ENCODE measurements at regions of chr3 and their contacts with region 1.

Region 1: DNA sequence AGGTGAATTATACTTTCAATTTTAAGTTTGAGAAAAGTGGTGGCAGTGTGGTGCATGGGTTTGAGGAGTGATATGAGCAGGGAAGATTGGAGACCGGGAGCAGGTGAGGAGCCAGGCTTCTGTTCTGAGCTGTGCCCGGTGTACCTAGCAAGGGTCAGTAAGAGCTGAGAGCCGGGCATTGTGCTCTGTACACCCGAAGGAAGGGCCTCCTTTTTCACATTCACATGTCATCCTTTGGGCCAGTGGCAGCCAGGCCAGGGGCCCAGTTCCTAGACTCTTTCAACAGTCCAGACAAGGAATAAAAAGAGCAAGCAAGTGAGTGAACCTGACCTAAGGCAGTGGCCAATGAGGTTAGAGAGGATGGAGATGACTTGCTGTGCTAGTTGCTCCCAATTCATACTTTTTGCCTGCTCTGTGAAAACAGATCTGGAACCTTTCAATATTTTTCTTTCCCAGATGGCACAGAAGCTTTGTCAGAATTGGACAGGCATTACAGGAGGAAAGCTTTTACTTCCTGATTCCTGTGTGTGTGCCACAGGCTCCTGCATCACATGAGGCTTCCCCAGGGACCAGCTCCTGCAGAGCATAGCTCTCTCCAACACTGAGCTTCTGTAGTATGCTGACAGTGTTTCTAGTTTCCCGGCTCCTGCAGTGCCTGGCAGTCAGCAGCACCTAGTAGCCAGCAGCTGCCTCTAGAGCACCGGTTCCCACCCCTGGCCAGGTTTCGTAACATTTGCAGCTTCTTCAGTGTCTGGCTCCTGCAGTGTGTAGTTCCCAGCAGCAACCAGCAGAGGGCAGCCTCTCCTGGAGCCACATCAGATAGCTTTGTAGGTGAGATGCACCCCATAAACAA is 5.3 kb upstream of the TRA2B start:
- DNase-seq: peak; percentile 76 to 93 (median 80)
- ATAC-seq: peak; percentile 100
- H3K4me3 ChIP-seq: peak overlapping the region; percentile 19
- H3K4me3 Mint-ChIP-seq: peak overlapping the region; percentile 52
- H3K27ac ChIP-seq: no peak overlapping the region
- H3K27ac Mint-ChIP-seq: peak overlapping the region; percentile 70
- H3K4me1 ChIP-seq: peaks cover 15% of the 10 kb centered on the region
- H3K4me1 Mint-ChIP-seq: peaks cover 23% of the 10 kb centered on the region
- H3K27me3 ChIP-seq: no peaks in the 10 kb centered on the region
- H3K27me3 Mint-ChIP-seq: no peaks in the 10 kb centered on the region
- CTCF ChIP-seq: peak; percentile 98

Region 2: DNA sequence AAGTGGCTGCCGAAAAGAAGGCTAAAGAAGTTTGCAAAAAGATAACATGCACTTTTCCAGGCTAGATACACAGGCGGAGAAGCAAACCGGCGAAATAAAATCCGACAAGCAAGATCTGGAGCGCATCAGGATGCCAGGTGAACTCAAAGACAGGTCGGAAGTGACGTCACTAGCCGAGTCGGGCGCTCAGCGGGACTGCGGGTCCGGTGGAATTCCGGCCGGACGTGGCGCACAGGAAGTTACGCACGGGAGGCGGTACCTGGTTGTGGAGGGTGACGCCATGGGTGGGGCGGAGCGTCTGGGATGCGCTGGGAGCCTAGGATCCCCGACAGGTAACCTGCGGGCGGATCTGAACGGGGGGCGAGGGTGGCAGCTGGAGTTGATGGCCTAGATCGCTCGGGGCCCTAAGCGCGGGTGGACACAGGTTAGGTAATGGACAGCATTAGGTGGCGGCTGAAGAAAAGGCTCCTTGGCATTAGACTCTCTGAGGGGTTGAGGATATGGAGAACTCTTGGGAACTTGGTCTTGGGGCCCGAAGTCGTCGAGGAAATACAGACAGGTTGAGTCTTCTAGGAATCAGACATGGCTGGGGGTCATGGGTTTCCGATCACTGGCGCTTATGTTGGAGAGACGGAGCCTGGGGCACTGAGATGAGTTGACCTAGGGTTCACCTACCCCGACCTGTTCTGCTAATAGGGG is 660.3 kb before region 1 on chr3:
- CTCF ChIA-PET with region 1: no interaction called
- POLR2A ChIA-PET with region 1: no interaction called
- intact Hi-C with region 1: loop called in 1 of 2 experiments (anchors 10 kb)
- DNase-seq: peak; percentile 83 to 97 (median 91)
- ATAC-seq: peak; percentile 99
- H3K4me3 ChIP-seq: peak overlapping the region; percentile 77
- H3K4me3 Mint-ChIP-seq: peak overlapping the region; percentile 92
- H3K27ac ChIP-seq: peak overlapping the region in 1 of 2 donors; percentile 65
- H3K27ac Mint-ChIP-seq: peak overlapping the region; percentile 84
- H3K4me1 ChIP-seq: peaks cover 14% of the 10 kb centered on the region
- H3K4me1 Mint-ChIP-seq: peaks cover 18% of the 10 kb centered on the region
- H3K27me3 ChIP-seq: peaks cover 3 to 10% of the 10 kb centered on the region in 2 experiments
- H3K27me3 Mint-ChIP-seq: peaks cover 26% of the 10 kb centered on the region
- CTCF ChIP-seq: no peak

Region 3: GRCh38 chr3:185912929-185913901 is 29.9 kb before region 1 on chr3:
- CTCF ChIA-PET with region 1: interaction called, 11 read pairs
- POLR2A ChIA-PET with region 1: interaction called, 23 read pairs
- intact Hi-C with region 1: no loop called
- DNase-seq: no peak
- ATAC-seq: peak; percentile 21
- H3K4me3 ChIP-seq: no peak overlapping the region
- H3K4me3 Mint-ChIP-seq: peak overlapping the region; percentile 12
- H3K27ac ChIP-seq: no peak overlapping the region
- H3K27ac Mint-ChIP-seq: peak overlapping the region; percentile 75
- H3K4me1 ChIP-seq: no peaks in the 10 kb centered on the region
- H3K4me1 Mint-ChIP-seq: peaks cover 15% of the 10 kb centered on the region
- H3K27me3 ChIP-seq: no peaks in the 10 kb centered on the region
- H3K27me3 Mint-ChIP-seq: no peaks in the 10 kb centered on the region
- CTCF ChIP-seq: no peak

Region 4: GRCh38 chr3:185929192-185930151 is 13.7 kb before region 1 on chr3:
- CTCF ChIA-PET with region 1: interaction called, 24 read pairs
- POLR2A ChIA-PET with region 1: interaction called, 116 read pairs
- intact Hi-C with region 1: loop called in 1 of 2 experiments (anchors 1 kb)
- DNase-seq: no peak
- ATAC-seq: no peak
- H3K4me3 ChIP-seq: peak overlapping the region; percentile 27
- H3K4me3 Mint-ChIP-seq: peak overlapping the region; percentile 97
- H3K27ac ChIP-seq: peak overlapping the region in 1 of 2 donors; percentile 24
- H3K27ac Mint-ChIP-seq: peak overlapping the region; percentile 56
- H3K4me1 ChIP-seq: peaks cover 37% of the 10 kb centered on the region
- H3K4me1 Mint-ChIP-seq: peaks cover 100% of the 10 kb centered on the region
- H3K27me3 ChIP-seq: no peaks in the 10 kb centered on the region
- H3K27me3 Mint-ChIP-seq: no peaks in the 10 kb centered on the region
- CTCF ChIP-seq: no peak

Region 5: DNA sequence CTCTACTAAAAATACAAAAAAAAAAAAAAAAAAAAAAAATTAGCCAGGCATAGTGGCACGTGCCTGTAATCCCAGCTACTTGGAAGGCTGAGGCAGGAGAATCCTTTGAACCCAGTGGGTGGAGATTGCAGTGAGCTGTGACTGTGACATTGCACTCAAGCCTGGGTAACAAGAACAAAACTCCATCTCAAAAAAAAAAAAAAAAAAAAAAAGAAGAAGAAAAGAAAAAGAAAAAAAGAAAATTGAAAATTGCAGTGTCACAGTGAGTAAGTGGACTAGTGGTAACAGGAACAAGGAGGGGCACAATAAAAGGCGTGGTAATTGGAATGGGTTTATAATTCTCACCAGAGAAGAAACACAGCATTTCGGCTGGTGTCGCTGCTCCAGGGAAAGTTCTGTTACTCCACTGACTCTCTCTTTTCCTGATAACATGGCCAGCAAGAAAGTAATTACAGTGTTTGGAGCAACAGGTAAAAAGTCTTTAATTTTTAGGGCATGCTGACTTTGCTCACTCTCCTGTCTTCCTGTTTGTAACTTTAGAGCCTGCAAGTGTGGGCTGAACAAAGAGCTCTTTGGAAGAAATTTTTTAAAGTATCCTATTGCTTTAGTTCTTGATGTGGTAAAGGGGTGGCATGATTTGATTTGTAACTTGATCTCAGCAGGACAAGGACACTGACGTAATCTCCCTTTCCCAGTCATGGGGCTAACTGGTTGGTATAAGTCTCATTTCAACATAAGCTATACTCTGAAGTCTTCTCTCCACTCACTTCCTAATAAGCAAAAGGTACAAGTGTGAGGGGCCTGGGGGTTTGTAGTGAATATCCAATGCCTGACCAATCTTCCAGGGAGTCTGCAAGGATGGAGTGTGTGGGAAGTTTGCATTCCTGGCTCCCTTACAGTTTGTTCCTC is 16.7 kb after region 1 on chr3:
- CTCF ChIA-PET with region 1: interaction called, 20 read pairs
- POLR2A ChIA-PET with region 1: interaction called, 23 read pairs
- intact Hi-C with region 1: no loop called
- DNase-seq: peak in 3 of 14 experiments; percentile 13 to 43 (median 35)
- ATAC-seq: peak; percentile 78
- H3K4me3 ChIP-seq: no peak overlapping the region
- H3K4me3 Mint-ChIP-seq: peak overlapping the region; percentile 50
- H3K27ac ChIP-seq: no peak overlapping the region
- H3K27ac Mint-ChIP-seq: no peak overlapping the region
- H3K4me1 ChIP-seq: peaks cover 13% of the 10 kb centered on the region
- H3K4me1 Mint-ChIP-seq: no peaks in the 10 kb centered on the region
- H3K27me3 ChIP-seq: no peaks in the 10 kb centered on the region
- H3K27me3 Mint-ChIP-seq: peaks cover 5% of the 10 kb centered on the region
- CTCF ChIP-seq: no peak

Region 6: GRCh38 chr3:186540221-186540834 is 597.2 kb after region 1 on chr3:
- CTCF ChIA-PET with region 1: interaction called, 10 read pairs
- POLR2A ChIA-PET with region 1: interaction called, 6 read pairs
- intact Hi-C with region 1: no loop called
- DNase-seq: peak; percentile 66 to 92 (median 80)
- ATAC-seq: peak; percentile 98
- H3K4me3 ChIP-seq: no peak overlapping the region
- H3K4me3 Mint-ChIP-seq: no peak overlapping the region
- H3K27ac ChIP-seq: no peak overlapping the region
- H3K27ac Mint-ChIP-seq: no peak overlapping the region
- H3K4me1 ChIP-seq: peaks cover 4% of the 10 kb centered on the region
- H3K4me1 Mint-ChIP-seq: peaks cover 7% of the 10 kb centered on the region
- H3K27me3 ChIP-seq: no peaks in the 10 kb centered on the region
- H3K27me3 Mint-ChIP-seq: no peaks in the 10 kb centered on the region
- CTCF ChIP-seq: peak; percentile 84

Measured in CD4-positive, alpha-beta T cell (primary cell).